ENCODE measurements at regions of chr21 and their contacts with region 1.

Region 1: DNA sequence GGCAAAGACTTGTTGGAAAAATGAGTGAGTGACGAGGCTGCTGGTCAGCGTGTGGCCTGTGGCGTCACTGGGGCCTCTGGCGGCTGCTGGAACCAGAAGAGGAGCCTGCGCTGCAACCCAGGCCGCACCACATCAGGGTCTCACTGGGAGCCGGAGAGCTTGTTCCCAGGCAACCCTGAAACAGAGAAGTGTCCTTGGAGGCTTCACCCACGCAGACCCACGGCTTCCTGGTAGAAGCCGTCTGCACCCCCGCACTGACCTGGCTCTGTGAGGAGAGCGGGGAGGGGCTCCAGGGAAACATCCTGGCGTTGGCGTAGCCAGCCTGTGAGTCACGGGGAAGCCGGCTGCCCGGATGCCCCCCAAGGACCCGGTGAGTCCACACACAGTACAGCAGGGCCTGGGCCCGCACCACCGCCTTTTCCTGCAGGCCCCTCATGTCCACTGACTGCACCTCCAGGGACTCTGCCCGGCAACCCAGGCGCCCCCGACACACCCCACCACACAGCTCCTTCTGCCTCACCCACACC is 57.4 kb downstream of the COL6A1 start:
- DNase-seq: peak; percentile 89 to 95 (median 92)
- H3K4me3 ChIP-seq: no peak overlapping the region
- H3K27ac ChIP-seq: peak overlapping the region; percentile 72 to 91
- H3K4me1 ChIP-seq: peaks cover 15% of the 10 kb centered on the region
- H3K27me3 ChIP-seq: no peaks in the 10 kb centered on the region
- CTCF ChIP-seq: no peak
- EP300 ChIP-seq: no peak
- POLR2A ChIP-seq: peak; percentile 22

Region 2: DNA sequence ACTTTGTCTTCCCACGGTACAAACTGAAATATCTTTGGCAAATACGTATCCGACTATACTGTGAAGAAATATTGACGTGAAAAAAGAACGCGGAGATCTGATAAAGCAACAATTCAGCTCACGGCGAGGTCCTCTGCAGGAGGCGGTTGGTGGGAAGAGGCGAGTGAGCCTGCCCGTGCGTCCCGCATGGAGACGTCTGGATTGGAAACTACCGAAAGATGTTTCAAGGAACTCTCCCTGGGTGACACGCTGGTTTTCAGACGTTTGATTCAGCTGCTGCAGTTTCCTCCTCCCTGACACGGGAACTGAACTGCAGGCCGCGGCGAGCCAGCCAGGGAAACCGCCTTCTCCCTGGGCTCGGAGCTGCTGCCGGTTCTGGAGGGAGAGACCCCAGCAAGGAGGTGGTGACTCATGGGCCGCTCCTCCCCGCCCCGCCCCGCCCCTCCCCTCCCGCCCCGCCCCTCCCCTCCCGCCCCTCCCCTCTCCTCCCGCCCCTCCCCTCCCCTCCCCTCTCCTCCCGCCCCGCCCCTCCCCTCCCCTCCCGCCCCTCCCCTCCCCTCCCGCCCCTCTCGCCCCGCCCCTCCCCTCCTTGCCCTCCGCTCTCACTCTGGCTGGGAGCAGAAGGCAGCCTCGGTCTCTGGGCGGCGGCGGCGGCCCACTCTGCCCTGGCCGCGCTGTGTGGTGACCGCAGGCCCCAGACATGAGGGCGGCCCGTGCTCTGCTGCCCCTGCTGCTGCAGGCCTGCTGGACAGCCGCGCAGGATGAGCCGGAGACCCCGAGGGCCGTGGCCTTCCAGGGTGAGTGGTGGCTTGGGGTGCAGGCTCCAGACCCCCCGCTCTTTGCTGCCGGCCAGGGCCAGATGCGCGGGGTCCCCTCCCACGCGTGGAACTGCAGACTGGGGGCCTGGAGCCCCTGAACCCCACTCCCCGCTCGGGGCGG is 57.5 kb before region 1 on chr21 and contains the start of gene COL6A1:
- intact Hi-C with region 1: loop called in 1 of 4 experiments (anchors 5 kb)
- DNase-seq: peak; percentile 87 to 90 (median 89)
- H3K4me3 ChIP-seq: peak within 1 kb of the TSS; percentile 99
- H3K27ac ChIP-seq: peak within 1 kb of the TSS; percentile 65 to 74
- H3K4me1 ChIP-seq: peaks cover 13% of the 10 kb centered on the region
- H3K27me3 ChIP-seq: no peaks in the 10 kb centered on the region
- CTCF ChIP-seq: no peak
- EP300 ChIP-seq: peak; percentile 31
- POLR2A ChIP-seq: peak; percentile 66
- total RNA-seq, gene COL6A1: 389 to 779 (median 731) TPM

Region 3: GRCh38 chr21:46084709-46085108 is 45.8 kb after region 1 on chr21:
- intact Hi-C with region 1: loop called in 1 of 4 experiments (anchors 5 kb)
- DNase-seq: peak in 4 of 5 donors; percentile 11 to 37 (median 29)
- H3K4me3 ChIP-seq: no peak overlapping the region
- H3K27ac ChIP-seq: no peak overlapping the region
- H3K4me1 ChIP-seq: peaks cover 2% of the 10 kb centered on the region
- H3K27me3 ChIP-seq: no peaks in the 10 kb centered on the region
- CTCF ChIP-seq: no peak
- EP300 ChIP-seq: no peak
- POLR2A ChIP-seq: no peak